Naive thymus-derived CD4-positive, alpha-beta T cell (primary cell): ENCODE measurements at regions of chr17 and their contacts with region 1.

Region 1: GRCh38 chr17:50151041-50151936 is 812 bp upstream of the PPP1R9B start:
- DNase-seq: peak; percentile 73 to 88 (median 79)
- ATAC-seq: peak; percentile 84
- H3K4me3 ChIP-seq: peak overlapping the region; percentile 94
- H3K4me3 Mint-ChIP-seq: peak overlapping the region; percentile 82 to 95 (median 87)
- H3K27ac ChIP-seq: peak overlapping the region; percentile 74
- H3K27ac Mint-ChIP-seq: peak overlapping the region; percentile 71 to 96 (median 84)
- H3K4me1 ChIP-seq: peaks cover 26 to 37% of the 10 kb centered on the region in 2 donors
- H3K4me1 Mint-ChIP-seq: peaks cover 11 to 52% (median 44%) of the 10 kb centered on the region in 7 donors
- H3K27me3 ChIP-seq: no peaks in the 10 kb centered on the region
- H3K27me3 Mint-ChIP-seq: no peaks in the 10 kb centered on the region

Region 2: DNA sequence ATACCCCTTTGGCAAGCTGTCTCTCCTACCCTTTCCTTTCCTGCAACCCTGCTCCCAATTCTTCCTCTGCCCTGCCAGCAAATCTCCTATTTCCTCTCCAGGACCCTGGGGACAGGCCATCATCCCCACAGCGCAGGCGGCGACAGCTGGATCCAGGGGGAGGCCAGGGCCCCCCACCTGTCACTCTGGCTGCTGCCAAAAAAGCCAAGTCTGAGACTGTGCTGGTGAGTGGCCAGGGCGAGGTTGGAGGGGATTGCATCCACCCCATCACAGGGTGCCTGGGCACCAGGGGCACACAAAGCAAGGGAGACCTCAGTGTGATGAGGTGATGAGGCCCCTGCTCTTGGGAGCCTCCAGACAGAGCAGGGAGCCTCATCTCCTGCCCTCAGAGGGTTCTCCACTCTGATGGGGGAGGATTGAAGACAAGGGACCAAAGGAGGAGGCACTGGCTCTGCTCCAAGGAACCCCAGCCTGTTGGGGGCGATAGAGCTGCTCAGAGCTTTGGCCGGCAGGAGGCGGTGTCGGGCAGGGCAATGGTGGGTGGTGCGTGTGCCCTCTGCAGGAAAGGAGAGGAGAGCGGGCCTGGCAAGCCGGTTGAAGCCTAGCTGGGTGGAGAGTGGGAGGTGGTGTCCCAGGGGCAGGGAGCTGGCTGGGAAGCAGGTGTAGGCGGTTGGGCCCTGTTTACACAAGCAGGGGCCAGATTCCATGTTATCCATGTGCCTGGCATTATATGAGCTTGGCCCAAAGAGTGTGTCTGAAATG is 71.8 kb before region 1 on chr17:
- CTCF ChIA-PET with region 1: no interaction called
- POLR2A ChIA-PET with region 1: no interaction called
- intact Hi-C with region 1: no loop called
- DNase-seq: no peak
- ATAC-seq: peak; percentile 76
- H3K4me3 ChIP-seq: no peak overlapping the region
- H3K4me3 Mint-ChIP-seq: no peak overlapping the region
- H3K27ac ChIP-seq: no peak overlapping the region
- H3K27ac Mint-ChIP-seq: no peak overlapping the region
- H3K4me1 ChIP-seq: no peaks in the 10 kb centered on the region
- H3K4me1 Mint-ChIP-seq: no peaks in the 10 kb centered on the region
- H3K27me3 ChIP-seq: no peaks in the 10 kb centered on the region
- H3K27me3 Mint-ChIP-seq: no peaks in the 10 kb centered on the region

Region 3: DNA sequence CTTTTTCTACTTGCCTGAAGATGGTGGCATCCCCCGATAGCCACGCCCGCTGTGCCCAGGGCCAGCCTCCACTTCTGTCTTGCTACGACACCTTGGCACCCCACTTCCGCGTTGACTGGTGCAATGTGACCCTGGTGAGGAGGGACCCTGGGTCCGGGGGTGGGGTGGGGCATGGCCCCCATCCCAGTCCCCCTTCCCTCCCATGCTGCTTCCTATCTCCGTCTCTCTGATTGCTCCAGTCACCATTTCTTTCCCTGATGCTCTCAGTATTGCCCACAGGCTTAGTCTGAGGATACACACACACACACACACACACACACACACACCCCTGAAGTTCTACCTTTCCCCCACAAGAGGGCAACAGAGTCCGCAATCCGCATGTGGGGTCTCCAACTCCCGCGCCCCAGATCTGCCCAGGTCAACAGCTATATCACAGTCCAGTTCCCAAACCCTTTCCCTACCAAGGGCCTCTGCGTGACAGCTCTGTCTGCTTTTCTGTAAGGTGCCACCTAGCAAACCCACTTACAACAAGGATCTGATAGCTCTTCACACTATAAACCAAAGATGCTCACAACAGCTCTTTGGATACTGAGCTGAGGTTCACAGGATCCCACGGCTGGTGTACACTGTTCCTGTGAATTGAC is 18.0 kb after region 1 on chr17:
- CTCF ChIA-PET with region 1: interaction called, 13 read pairs
- POLR2A ChIA-PET with region 1: interaction called, 3 read pairs
- intact Hi-C with region 1: no loop called
- DNase-seq: peak; percentile 50 to 78 (median 71)
- ATAC-seq: peak; percentile 93
- H3K4me3 ChIP-seq: peak overlapping the region; percentile 52
- H3K4me3 Mint-ChIP-seq: peak overlapping the region; percentile 42 to 78 (median 62)
- H3K27ac ChIP-seq: peak overlapping the region; percentile 38
- H3K27ac Mint-ChIP-seq: peak overlapping the region; percentile 24 to 93 (median 79)
- H3K4me1 ChIP-seq: peaks cover 9 to 10% of the 10 kb centered on the region in 2 donors
- H3K4me1 Mint-ChIP-seq: peaks cover 11 to 14% (median 12%) of the 10 kb centered on the region in 7 donors
- H3K27me3 ChIP-seq: no peaks in the 10 kb centered on the region
- H3K27me3 Mint-ChIP-seq: no peaks in the 10 kb centered on the region

Region 4: GRCh38 chr17:50297407-50297865 is 146.1 kb after region 1 on chr17:
- CTCF ChIA-PET with region 1: no interaction called
- POLR2A ChIA-PET with region 1: no interaction called
- intact Hi-C with region 1: no loop called
- DNase-seq: peak; percentile 58 to 82 (median 76)
- ATAC-seq: peak; percentile 98
- H3K4me3 ChIP-seq: no peak overlapping the region
- H3K4me3 Mint-ChIP-seq: no peak overlapping the region
- H3K27ac ChIP-seq: no peak overlapping the region
- H3K27ac Mint-ChIP-seq: no peak overlapping the region
- H3K4me1 ChIP-seq: no peaks in the 10 kb centered on the region
- H3K4me1 Mint-ChIP-seq: peaks cover 0 to 10% (median 0%) of the 10 kb centered on the region in 7 donors
- H3K27me3 ChIP-seq: no peaks in the 10 kb centered on the region
- H3K27me3 Mint-ChIP-seq: peaks cover 0 to 14% (median 5%) of the 10 kb centered on the region in 5 donors

Region 5: GRCh38 chr17:50547035-50547735 is 395.9 kb after region 1 on chr17 and contains the start of gene SPATA20:
- CTCF ChIA-PET with region 1: no interaction called
- POLR2A ChIA-PET with region 1: no interaction called
- intact Hi-C with region 1: no loop called
- DNase-seq: peak; percentile 73 to 86 (median 83)
- ATAC-seq: peak; percentile 90
- H3K4me3 ChIP-seq: peak within 1 kb of the TSS; percentile 65
- H3K4me3 Mint-ChIP-seq: peak within 1 kb of the TSS; percentile 52 to 85 (median 76)
- H3K27ac ChIP-seq: peak within 1 kb of the TSS; percentile 66
- H3K27ac Mint-ChIP-seq: peak within 1 kb of the TSS in 5 of 9 donors; percentile 37 to 87 (median 81)
- H3K4me1 ChIP-seq: peaks cover 11% of the 10 kb centered on the region in 2 donors
- H3K4me1 Mint-ChIP-seq: peaks cover 0 to 25% (median 20%) of the 10 kb centered on the region in 7 donors
- H3K27me3 ChIP-seq: no peaks in the 10 kb centered on the region
- H3K27me3 Mint-ChIP-seq: peaks cover 0 to 28% (median 7%) of the 10 kb centered on the region in 5 donors
- total RNA-seq, gene SPATA20: 14.3 to 19.4 (median 16.4) TPM